GM12878 (cell line): ENCODE measurements at regions of chr20 and their contacts with region 1.

Region 1: DNA sequence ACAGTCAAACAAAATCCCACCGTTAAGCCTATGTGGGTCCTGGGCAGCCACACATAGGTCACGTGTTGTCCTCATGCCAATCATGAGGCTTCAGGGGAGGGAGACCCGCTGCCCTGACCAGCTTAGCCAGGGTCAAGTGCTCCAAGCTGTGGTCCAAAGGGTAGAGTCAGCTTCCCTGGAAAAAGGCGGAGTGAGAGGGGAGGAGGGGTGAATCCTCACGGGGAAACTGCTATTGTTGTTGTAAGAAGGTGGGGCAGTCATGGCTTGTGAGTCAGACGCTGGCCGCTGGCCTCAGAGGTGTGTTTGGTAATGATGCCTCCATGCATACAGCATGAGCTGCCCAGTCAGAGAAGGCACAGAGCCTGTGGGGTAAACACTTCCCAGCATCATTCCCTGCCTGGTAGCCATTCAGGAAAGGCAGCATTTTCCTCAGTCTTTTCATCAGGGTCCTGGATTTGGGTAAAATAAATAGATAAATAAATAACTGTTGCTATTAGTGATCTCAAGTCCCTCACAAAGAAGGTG is 8.7 kb downstream of the CST3 start:
- DNase-seq: no peak
- ATAC-seq: no peak
- H3K4me3 ChIP-seq: no peak overlapping the region
- H3K27ac ChIP-seq: no peak overlapping the region
- H3K4me1 ChIP-seq: peaks cover 22% of the 10 kb centered on the region
- H3K27me3 ChIP-seq: no peaks in the 10 kb centered on the region
- CTCF ChIP-seq: no peak
- EP300 ChIP-seq: no peak
- POLR2A ChIP-seq: no peak
- RAD21 ChIP-seq: no peak

Region 2: GRCh38 chr20:23214903-23215302 is 414.2 kb before region 1 on chr20:
- CTCF ChIA-PET with region 1: no interaction called
- POLR2A ChIA-PET with region 1: no interaction called
- RAD21 ChIA-PET with region 1: no interaction called
- SMC1A ChIA-PET with region 1: no interaction called
- in situ Hi-C with region 1: no loop called
- intact Hi-C with region 1: no loop called
- DNase-seq: no peak
- ATAC-seq: no peak
- H3K4me3 ChIP-seq: no peak overlapping the region
- H3K27ac ChIP-seq: no peak overlapping the region
- H3K4me1 ChIP-seq: no peaks in the 10 kb centered on the region
- H3K27me3 ChIP-seq: no peaks in the 10 kb centered on the region
- CTCF ChIP-seq: no peak
- EP300 ChIP-seq: no peak
- POLR2A ChIP-seq: no peak
- RAD21 ChIP-seq: no peak

Region 3: GRCh38 chr20:23357767-23358591 is 271.1 kb before region 1 on chr20:
- CTCF ChIA-PET with region 1: no interaction called
- POLR2A ChIA-PET with region 1: no interaction called
- RAD21 ChIA-PET with region 1: no interaction called
- SMC1A ChIA-PET with region 1: no interaction called
- in situ Hi-C with region 1: no loop called
- intact Hi-C with region 1: loop called (anchors 5 kb)
- DNase-seq: peak; percentile 96
- ATAC-seq: peak; percentile 88
- H3K4me3 ChIP-seq: peak overlapping the region; percentile 78
- H3K27ac ChIP-seq: peak overlapping the region; percentile 85
- H3K4me1 ChIP-seq: peaks cover 7% of the 10 kb centered on the region
- H3K27me3 ChIP-seq: no peaks in the 10 kb centered on the region
- CTCF ChIP-seq: no peak; a peak in 2 of 6 replicates
- EP300 ChIP-seq: peak in 1 of 2 experiments; percentile 48; a peak in 1 of 4 replicates
- POLR2A ChIP-seq: peak; percentile 82
- RAD21 ChIP-seq: no peak

Region 4: DNA sequence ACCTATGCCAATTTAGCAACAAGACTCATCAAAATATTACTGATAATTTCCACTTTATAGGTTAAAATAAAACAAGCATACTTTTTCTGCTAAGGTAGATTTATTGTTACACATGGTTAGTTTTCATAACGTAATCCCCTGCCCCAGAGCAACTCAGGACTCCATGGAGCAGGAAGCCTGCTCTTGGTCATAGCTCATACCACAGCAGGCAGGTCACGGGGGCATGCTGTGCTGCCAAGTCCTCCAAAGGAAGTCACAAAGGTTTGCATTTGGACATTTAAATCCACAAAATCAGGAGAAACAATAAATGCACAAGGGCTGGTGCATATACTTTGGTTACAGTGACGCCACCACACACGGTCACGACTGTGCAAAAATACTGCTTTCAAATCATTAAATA is 254.6 kb before region 1 on chr20:
- CTCF ChIA-PET with region 1: no interaction called
- POLR2A ChIA-PET with region 1: no interaction called
- RAD21 ChIA-PET with region 1: no interaction called
- SMC1A ChIA-PET with region 1: no interaction called
- in situ Hi-C with region 1: no loop called
- intact Hi-C with region 1: no loop called
- DNase-seq: no peak
- ATAC-seq: no peak
- H3K4me3 ChIP-seq: no peak overlapping the region
- H3K27ac ChIP-seq: no peak overlapping the region
- H3K4me1 ChIP-seq: no peaks in the 10 kb centered on the region
- H3K27me3 ChIP-seq: no peaks in the 10 kb centered on the region
- CTCF ChIP-seq: no peak
- EP300 ChIP-seq: no peak
- POLR2A ChIP-seq: no peak
- RAD21 ChIP-seq: no peak

Region 5: GRCh38 chr20:23600330-23600729 is 28.7 kb before region 1 on chr20:
- CTCF ChIA-PET with region 1: no interaction called
- POLR2A ChIA-PET with region 1: no interaction called
- RAD21 ChIA-PET with region 1: no interaction called
- SMC1A ChIA-PET with region 1: no interaction called
- in situ Hi-C with region 1: no loop called
- intact Hi-C with region 1: no loop called
- DNase-seq: no peak
- ATAC-seq: no peak
- H3K4me3 ChIP-seq: no peak overlapping the region
- H3K27ac ChIP-seq: no peak overlapping the region
- H3K4me1 ChIP-seq: no peaks in the 10 kb centered on the region
- H3K27me3 ChIP-seq: no peaks in the 10 kb centered on the region
- CTCF ChIP-seq: no peak
- EP300 ChIP-seq: no peak
- POLR2A ChIP-seq: no peak
- RAD21 ChIP-seq: no peak

Region 6: DNA sequence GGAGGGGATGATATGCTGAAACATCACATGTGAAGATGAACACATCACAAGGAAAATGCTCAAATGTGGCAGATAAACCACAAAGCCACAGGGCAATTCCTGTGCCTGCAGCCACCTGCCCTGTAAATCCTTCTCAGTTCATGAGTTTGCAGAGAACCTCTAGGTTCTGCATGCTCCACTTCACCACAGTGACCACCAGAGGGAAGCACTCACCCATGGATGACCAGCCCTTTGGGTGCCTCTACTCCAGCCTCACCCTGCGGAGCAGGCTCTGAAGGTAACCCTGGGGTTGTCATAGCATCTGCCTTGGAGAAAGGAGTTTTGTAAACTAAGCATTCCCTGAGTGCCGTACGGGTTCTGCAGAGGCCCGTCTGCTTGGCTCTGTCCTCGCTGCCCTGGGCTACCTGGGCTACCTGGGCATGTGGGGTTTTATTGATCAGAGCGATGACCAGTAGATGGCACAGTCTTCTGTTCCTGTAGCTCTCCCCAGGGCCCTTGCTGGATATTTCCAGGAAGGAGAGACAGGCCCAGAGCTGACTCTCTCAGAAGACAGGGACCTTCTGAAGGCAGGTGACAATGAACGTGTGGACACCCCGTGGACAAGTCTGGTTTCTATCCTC is 153.4 kb after region 1 on chr20:
- CTCF ChIA-PET with region 1: no interaction called
- POLR2A ChIA-PET with region 1: no interaction called
- RAD21 ChIA-PET with region 1: no interaction called
- SMC1A ChIA-PET with region 1: no interaction called
- in situ Hi-C with region 1: no loop called
- intact Hi-C with region 1: no loop called
- DNase-seq: no peak
- ATAC-seq: peak; percentile 72
- H3K4me3 ChIP-seq: no peak overlapping the region
- H3K27ac ChIP-seq: no peak overlapping the region
- H3K4me1 ChIP-seq: no peaks in the 10 kb centered on the region
- H3K27me3 ChIP-seq: peaks cover 0 to 2% of the 10 kb centered on the region in 2 experiments; a peak in 1 of 4 replicates
- CTCF ChIP-seq: peak; percentile 35 to 50 (median 38); a peak in 5 of 6 replicates
- EP300 ChIP-seq: no peak
- POLR2A ChIP-seq: no peak
- RAD21 ChIP-seq: peak; percentile 33; the same call in 1 of the 2 replicates